ENCODE measurements at regions of chr4 and their contacts with region 1.

Region 1: DNA sequence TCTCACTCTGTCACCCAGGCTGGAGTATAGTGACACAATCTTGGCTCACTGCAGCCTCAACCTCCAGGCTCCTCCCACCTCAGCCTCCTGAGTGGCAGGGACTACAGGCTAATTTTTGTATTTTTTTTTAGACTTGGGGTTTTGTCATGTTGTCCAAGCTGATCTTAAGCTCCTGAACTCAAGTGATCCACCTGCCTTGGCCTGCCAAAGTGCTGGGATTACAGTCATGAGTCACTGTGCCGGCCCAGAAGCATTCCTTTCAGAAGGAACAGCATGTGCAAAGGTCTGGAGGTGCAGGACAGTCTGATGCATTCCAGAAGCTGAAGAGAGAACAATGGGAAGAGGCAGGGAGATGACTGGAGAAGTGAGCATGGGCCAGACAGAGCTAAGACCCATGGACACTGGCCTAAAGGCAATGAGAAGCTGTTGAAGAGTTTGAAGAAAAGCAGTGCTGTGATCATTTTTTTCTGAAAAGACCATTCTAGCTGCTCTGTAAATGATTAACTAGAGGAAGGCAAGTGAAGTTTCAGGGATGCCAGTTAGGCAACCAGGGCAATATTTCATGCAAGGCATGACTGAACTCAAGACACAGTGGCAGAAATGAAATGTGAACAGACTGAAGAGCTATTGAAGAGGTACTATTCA is 43.2 kb downstream of the MANBA start:
- DNase-seq: peak; percentile 38 to 56
- H3K4me3 ChIP-seq: no peak overlapping the region
- H3K4me3 Mint-ChIP-seq: peak overlapping the region; percentile 1
- H3K27ac Mint-ChIP-seq: peak overlapping the region; percentile 25
- H3K4me1 ChIP-seq: peaks cover 35% of the 10 kb centered on the region
- H3K4me1 Mint-ChIP-seq: peaks cover 25% of the 10 kb centered on the region
- H3K27me3 ChIP-seq: no peaks in the 10 kb centered on the region
- H3K27me3 Mint-ChIP-seq: no peaks in the 10 kb centered on the region
- CTCF ChIP-seq: no peak

Region 2: GRCh38 chr4:102674881-102675540 is 42.6 kb before region 1 on chr4:
- CTCF ChIA-PET with region 1: no interaction called
- POLR2A ChIA-PET with region 1: no interaction called
- intact Hi-C with region 1: loop called (anchors 1 kb)
- DNase-seq: peak; percentile 68 to 69
- H3K4me3 ChIP-seq: no peak overlapping the region
- H3K4me3 Mint-ChIP-seq: no peak overlapping the region
- H3K27ac Mint-ChIP-seq: peak overlapping the region; percentile 87
- H3K4me1 ChIP-seq: peaks cover 60% of the 10 kb centered on the region
- H3K4me1 Mint-ChIP-seq: peaks cover 15% of the 10 kb centered on the region
- H3K27me3 ChIP-seq: no peaks in the 10 kb centered on the region
- H3K27me3 Mint-ChIP-seq: no peaks in the 10 kb centered on the region
- CTCF ChIP-seq: no peak

Measured in Caco-2 (cell line).